Right cardiac atrium (tissue), 5 donors: ENCODE measurements at regions of chr6 and their contacts with region 1.

Region 1: GRCh38 chr6:56714982-56715456 is 72.3 kb upstream of the DST start:
- DNase-seq: no peak
- ATAC-seq: peak; percentile 15 to 30
- H3K4me3 ChIP-seq: no peak overlapping the region
- H3K27ac ChIP-seq: peak overlapping the region; percentile 82
- H3K4me1 ChIP-seq: peaks cover 3% of the 10 kb centered on the region
- H3K27me3 ChIP-seq: no peaks in the 10 kb centered on the region

Region 2: GRCh38 chr6:56757588-56757984 is 42.6 kb after region 1 on chr6:
- intact Hi-C with region 1: loop called in 3 of 4 experiments (anchors 5 to 10 kb)
- DNase-seq: no peak
- ATAC-seq: peak in 1 of 2 donors; percentile 55
- H3K4me3 ChIP-seq: no peak overlapping the region
- H3K27ac ChIP-seq: no peak overlapping the region
- H3K4me1 ChIP-seq: peaks cover 6% of the 10 kb centered on the region
- H3K27me3 ChIP-seq: no peaks in the 10 kb centered on the region